WTC11 (cell line): ENCODE measurements at regions of chr11 and their contacts with region 1.

Region 1: GRCh38 chr11:59753650-59754493 is 1.3 kb upstream of the STX3 start:
- DNase-seq: peak; percentile 88
- ATAC-seq: peak; percentile 35
- H3K4me3 Mint-ChIP-seq: peak overlapping the region; percentile 98
- H3K27ac Mint-ChIP-seq: no peak overlapping the region
- H3K4me1 Mint-ChIP-seq: peaks cover 24% of the 10 kb centered on the region
- H3K27me3 Mint-ChIP-seq: peaks cover 6% of the 10 kb centered on the region
- CTCF ChIP-seq: peak; percentile 97

Region 2: DNA sequence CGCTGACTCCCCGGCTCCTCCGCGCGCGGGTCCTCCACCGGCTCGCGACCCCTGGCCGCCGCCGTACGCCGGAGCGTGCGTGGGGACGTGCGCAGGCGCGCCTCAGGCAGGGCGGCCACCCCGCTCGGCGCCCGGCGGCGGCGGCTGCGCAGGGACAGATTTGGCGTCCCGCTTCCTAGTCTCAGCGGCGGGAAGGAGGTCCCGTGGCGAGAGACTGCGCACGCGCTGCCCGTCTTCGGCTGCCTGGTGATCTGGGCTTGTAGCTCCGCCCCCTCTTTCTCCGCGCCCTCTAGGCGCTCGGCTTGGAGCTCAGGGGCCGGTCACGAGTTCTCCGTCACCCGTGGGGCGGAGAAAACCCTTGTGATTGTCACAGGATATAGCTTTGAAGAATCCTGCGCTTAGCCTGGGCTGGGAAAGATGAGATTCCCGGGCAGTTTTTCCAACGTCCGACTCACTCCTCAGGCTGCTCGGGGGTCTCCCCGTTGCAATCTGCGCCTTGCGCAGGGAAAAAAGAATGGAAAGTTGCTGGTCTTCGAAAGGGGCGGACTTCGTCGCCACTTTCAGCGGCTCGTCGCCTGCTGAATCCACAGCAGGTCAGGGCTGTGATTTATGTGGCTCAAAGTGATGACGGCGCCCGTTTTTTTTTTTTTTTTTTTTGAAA is 84.8 kb before region 1 on chr11 and contains the start of gene PATL1:
- CTCF ChIA-PET with region 1: interaction called, 16 read pairs
- POLR2A ChIA-PET with region 1: interaction called, 13 read pairs
- DNase-seq: peak; percentile 96
- ATAC-seq: peak; percentile 89
- H3K4me3 Mint-ChIP-seq: peak within 1 kb of the TSS; percentile 92
- H3K27ac Mint-ChIP-seq: peak within 1 kb of the TSS; percentile 99
- H3K4me1 Mint-ChIP-seq: peaks cover 18% of the 10 kb centered on the region
- H3K27me3 Mint-ChIP-seq: no peaks in the 10 kb centered on the region; the same call in 1 of the 2 replicates
- CTCF ChIP-seq: no peak
- total RNA-seq, gene PATL1: 27.6 to 30.5 TPM (median 29.9 TPM) in 3 replicates

Region 3: DNA sequence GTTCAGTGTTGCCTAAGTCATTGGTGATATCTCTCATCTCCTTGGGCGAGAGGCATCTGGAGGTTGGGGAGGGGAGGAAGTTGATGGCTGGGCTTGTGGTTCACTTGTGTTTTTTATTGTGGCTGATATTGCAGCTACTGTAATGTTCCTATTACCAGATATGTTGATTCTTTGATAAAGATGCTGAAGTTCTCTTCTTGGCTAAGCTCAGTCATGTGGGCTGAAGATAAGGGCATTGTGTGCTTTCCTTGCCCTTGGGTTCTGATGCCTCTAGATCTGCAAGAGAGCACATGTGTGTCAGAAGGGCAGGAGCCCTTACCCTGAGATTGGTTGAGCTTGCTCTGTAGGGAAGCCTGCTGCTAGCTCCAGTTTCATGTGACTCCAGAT is 13.3 kb after region 1 on chr11:
- CTCF ChIA-PET with region 1: interaction called, 32 read pairs
- POLR2A ChIA-PET with region 1: no interaction called
- DNase-seq: no peak
- ATAC-seq: no peak
- H3K4me3 Mint-ChIP-seq: no peak overlapping the region
- H3K27ac Mint-ChIP-seq: no peak overlapping the region; the same call in 1 of the 2 replicates
- H3K4me1 Mint-ChIP-seq: peaks cover 15% of the 10 kb centered on the region
- H3K27me3 Mint-ChIP-seq: no peaks in the 10 kb centered on the region
- CTCF ChIP-seq: no peak

Region 4: DNA sequence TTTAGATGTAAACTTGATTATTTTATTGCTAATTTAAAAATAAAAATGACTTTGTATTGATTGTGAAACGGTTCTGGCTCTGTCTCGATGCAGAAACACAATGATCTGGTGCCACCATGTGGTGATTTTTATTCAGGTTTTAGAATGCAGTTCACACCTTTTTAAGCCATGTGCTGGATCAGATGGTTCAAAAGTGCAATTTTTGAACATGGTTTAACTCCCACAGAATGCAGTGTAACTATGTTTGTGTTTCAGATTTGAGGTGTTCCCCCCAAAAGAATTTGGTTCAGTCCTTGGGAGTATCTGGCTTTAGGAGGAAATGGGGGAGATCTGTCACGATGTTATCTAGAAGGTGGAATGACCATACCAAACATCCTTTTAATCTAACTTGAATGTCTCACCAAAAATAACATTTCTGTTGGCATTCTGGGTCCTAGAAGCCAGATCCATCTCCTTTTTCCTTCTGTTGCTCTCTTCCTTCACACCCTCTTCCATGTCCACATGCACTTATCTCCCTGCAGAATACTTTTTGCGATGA is 48.8 kb after region 1 on chr11:
- CTCF ChIA-PET with region 1: interaction called, 13 read pairs
- POLR2A ChIA-PET with region 1: no interaction called
- DNase-seq: no peak
- ATAC-seq: peak; percentile 48
- H3K4me3 Mint-ChIP-seq: no peak overlapping the region
- H3K27ac Mint-ChIP-seq: no peak overlapping the region
- H3K4me1 Mint-ChIP-seq: peaks cover 4% of the 10 kb centered on the region; the same call in 1 of the 2 replicates
- H3K27me3 Mint-ChIP-seq: no peaks in the 10 kb centered on the region
- CTCF ChIP-seq: peak; percentile 23; the same call in 1 of the 2 replicates

Region 5: DNA sequence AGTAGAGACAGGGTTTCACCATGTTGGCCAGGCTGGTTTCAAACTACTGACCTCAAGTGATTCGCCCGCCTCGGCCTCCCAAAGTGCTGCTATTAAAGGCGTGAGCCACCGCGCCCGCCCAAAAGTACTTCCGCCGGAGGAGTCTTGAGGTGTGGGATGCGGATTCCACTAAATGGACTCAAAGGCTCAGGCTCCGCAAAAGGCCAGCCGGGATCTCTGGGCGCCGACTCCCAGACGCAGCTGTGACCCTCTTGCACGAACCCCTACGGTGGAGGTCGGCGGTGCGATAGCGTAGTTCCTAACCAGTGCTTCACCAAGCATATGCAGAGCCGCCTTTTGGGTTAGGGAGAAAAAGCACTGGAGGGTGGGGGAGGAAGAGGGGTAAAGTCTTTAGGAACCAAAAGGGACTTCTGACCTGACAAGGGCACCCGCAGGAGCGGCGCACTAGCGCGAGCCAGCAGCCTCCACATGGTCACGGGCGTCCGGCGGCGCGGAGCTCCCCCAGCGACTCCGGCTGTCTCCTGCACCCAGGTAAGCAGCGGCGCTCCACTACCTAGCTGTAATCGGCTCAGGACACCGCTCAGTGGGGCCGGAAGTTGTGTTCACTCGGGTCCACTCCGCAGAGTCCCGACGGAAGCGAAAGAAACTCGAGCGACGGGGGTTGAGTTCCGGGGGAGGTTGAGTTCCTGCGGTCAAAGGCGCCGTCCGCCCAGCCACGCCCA is 56.5 kb after region 1 on chr11 and contains the start of gene MRPL16:
- CTCF ChIA-PET with region 1: interaction called, 18 read pairs
- POLR2A ChIA-PET with region 1: no interaction called
- DNase-seq: peak; percentile 88
- ATAC-seq: peak; percentile 97
- H3K4me3 Mint-ChIP-seq: peak within 1 kb of the TSS; percentile 92
- H3K27ac Mint-ChIP-seq: peak within 1 kb of the TSS; percentile 80
- H3K4me1 Mint-ChIP-seq: peaks cover 44% of the 10 kb centered on the region
- H3K27me3 Mint-ChIP-seq: no peaks in the 10 kb centered on the region
- CTCF ChIP-seq: no peak
- total RNA-seq, gene MRPL16: 78.9 to 85.6 TPM (median 83.9 TPM) in 3 replicates

Region 6: GRCh38 chr11:59918987-59919589 is 165.2 kb after region 1 on chr11:
- CTCF ChIA-PET with region 1: interaction called, 28 read pairs
- POLR2A ChIA-PET with region 1: no interaction called
- DNase-seq: peak; percentile 35
- ATAC-seq: peak; percentile 58; the same call in 1 of the 2 replicates
- H3K4me3 Mint-ChIP-seq: no peak overlapping the region
- H3K27ac Mint-ChIP-seq: no peak overlapping the region
- H3K4me1 Mint-ChIP-seq: no peaks in the 10 kb centered on the region
- H3K27me3 Mint-ChIP-seq: 0 out of 2 replicates have a peak, but pooled peaks cover 3% of the 10 kb centered on the region
- CTCF ChIP-seq: no peak

Region 7: DNA sequence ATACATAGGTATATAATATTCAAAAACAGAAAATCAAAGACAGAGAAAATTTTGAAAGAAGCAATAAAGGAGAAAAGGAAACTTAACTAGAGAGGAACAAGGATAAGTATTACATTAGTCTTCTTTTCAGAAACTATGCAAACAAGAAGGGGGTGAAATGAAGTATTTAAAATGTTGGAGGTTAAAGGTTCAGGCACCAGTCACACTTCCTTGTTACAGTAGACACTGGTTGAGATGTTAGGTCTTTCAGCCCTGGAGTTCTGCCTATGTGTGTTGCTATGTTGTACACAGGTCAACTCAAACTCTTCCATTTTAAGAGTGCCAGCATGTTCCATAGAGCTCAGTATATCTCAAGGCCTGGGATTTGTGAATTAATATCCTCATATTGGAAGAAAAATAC is 520.5 kb after region 1 on chr11:
- CTCF ChIA-PET with region 1: no interaction called
- POLR2A ChIA-PET with region 1: no interaction called
- DNase-seq: no peak
- ATAC-seq: no peak
- H3K4me3 Mint-ChIP-seq: no peak overlapping the region
- H3K27ac Mint-ChIP-seq: no peak overlapping the region
- H3K4me1 Mint-ChIP-seq: peaks cover 28% of the 10 kb centered on the region
- H3K27me3 Mint-ChIP-seq: peaks cover 7% of the 10 kb centered on the region
- CTCF ChIP-seq: no peak

Region 8: GRCh38 chr11:60288531-60288930 is 534.7 kb after region 1 on chr11:
- CTCF ChIA-PET with region 1: no interaction called
- POLR2A ChIA-PET with region 1: interaction called, 10 read pairs
- DNase-seq: no peak
- ATAC-seq: no peak
- H3K4me3 Mint-ChIP-seq: no peak overlapping the region
- H3K27ac Mint-ChIP-seq: no peak overlapping the region
- H3K4me1 Mint-ChIP-seq: peaks cover 33% of the 10 kb centered on the region
- H3K27me3 Mint-ChIP-seq: peaks cover 3% of the 10 kb centered on the region
- CTCF ChIP-seq: no peak